Breast epithelium (tissue), 4 donors: ENCODE measurements at regions of chr7 and their contacts with region 1.

Region 1: DNA sequence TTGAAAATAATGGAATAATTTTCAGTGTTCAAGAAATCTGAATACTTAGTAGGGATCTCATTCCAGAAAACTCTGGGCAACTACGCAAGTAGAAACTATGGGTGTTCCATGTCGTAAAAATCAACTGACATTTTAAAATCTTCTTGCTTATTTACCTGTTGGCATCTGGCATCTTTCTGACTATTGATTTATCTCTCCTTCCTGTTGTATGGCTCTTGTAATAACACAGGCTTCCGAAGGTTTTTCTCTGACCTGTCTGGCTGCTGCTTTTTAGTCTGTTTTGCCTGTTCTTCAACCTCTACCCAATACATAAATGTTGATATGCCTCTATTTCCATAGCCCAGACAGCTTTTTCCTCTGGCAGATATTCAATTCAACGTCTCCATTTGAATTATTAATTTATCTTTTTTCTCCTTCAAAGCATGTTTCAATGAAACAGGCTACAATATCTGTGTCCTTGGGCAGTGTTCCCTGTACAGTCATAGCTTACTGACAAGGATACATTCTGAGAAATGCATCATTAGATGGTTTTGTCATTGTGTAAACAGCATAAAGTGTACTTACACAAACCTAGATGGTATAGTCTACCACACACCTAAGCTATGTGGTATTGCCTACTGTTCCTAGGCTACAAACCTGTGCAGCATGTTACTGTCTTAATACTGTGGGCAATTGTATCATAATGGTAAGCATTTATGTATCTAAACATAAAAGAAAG is 105.9 kb upstream of the ETV1 start:
- DNase-seq: no peak
- H3K4me3 ChIP-seq: no peak overlapping the region
- H3K27ac ChIP-seq: no peak overlapping the region
- H3K4me1 ChIP-seq: no peaks in the 10 kb centered on the region
- H3K27me3 ChIP-seq: no peaks in the 10 kb centered on the region
- CTCF ChIP-seq: no peak
- POLR2A ChIP-seq: no peak

Region 2: GRCh38 chr7:13407911-13408310 is 687.5 kb before region 1 on chr7:
- intact Hi-C with region 1: loop called (anchors 5 kb)
- DNase-seq: no peak
- H3K4me3 ChIP-seq: no peak overlapping the region
- H3K27ac ChIP-seq: no peak overlapping the region
- H3K4me1 ChIP-seq: no peaks in the 10 kb centered on the region
- H3K27me3 ChIP-seq: no peaks in the 10 kb centered on the region
- CTCF ChIP-seq: no peak
- POLR2A ChIP-seq: no peak

Region 3: DNA sequence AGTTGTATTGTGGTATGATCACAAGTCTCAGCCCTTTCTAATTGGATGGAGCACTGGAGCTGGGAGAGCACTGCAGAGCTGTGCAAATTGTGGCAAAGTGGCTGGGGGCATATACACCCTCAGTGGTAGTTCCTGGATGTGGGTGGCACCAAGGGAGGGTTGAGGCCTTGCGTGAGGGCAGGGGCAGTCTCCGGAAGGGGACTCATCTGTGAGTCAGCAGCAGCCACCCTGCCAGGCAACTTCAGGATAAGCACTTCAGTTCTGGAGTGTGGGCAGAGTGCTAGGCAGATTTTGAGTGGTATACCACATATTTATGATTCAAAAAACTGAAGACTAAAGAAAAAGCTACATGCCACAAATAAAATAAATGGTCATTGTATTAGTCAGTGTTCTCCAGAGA is 316.4 kb before region 1 on chr7:
- intact Hi-C with region 1: loop called (anchors 5 kb)
- DNase-seq: no peak
- H3K4me3 ChIP-seq: no peak overlapping the region
- H3K27ac ChIP-seq: no peak overlapping the region
- H3K4me1 ChIP-seq: no peaks in the 10 kb centered on the region
- H3K27me3 ChIP-seq: no peaks in the 10 kb centered on the region
- CTCF ChIP-seq: no peak
- POLR2A ChIP-seq: no peak

Region 4: GRCh38 chr7:13908667-13909397 is 186.6 kb before region 1 on chr7:
- intact Hi-C with region 1: no loop called
- DNase-seq: no peak
- H3K4me3 ChIP-seq: no peak overlapping the region
- H3K27ac ChIP-seq: no peak overlapping the region
- H3K4me1 ChIP-seq: no peaks in the 10 kb centered on the region
- H3K27me3 ChIP-seq: no peaks in the 10 kb centered on the region
- CTCF ChIP-seq: no peak
- POLR2A ChIP-seq: no peak